Vagina (tissue), 2 donors: ENCODE measurements at regions of chr7 and their contacts with region 1.

Region 1: DNA sequence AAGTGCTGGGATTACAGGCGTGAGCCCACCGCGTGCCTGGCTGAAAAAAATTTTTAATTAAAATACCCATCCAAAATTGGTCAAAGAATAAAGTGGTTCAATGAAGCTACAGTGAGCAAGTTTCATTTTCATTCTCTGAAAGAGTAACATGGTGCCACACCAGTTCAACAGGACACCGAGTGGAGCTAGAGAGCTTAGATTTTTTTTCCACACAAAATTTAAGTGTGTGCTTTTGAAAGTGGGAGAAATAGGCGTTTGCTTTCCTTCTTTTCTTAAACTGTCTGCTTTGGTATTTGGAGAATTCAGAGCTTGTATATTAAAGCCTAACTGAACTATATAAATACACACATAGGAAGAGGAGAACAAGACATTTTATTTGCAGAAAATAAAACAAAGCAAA is 43.4 kb downstream of the BPGM start:
- DNase-seq: no peak
- H3K4me3 ChIP-seq: peak overlapping the region; percentile 17 to 25
- H3K27ac ChIP-seq: peak overlapping the region; percentile 64
- H3K4me1 ChIP-seq: peaks cover 43% of the 10 kb centered on the region
- H3K27me3 ChIP-seq: no peaks in the 10 kb centered on the region
- CTCF ChIP-seq: peak in 1 of 3 experiments; percentile 67
- POLR2A ChIP-seq: no peak

Region 2: GRCh38 chr7:134741907-134742635 is 52.1 kb after region 1 on chr7:
- intact Hi-C with region 1: loop called (anchors 10 kb)
- DNase-seq: no peak
- H3K4me3 ChIP-seq: no peak overlapping the region
- H3K27ac ChIP-seq: peak overlapping the region; percentile 84
- H3K4me1 ChIP-seq: peaks cover 10% of the 10 kb centered on the region
- H3K27me3 ChIP-seq: no peaks in the 10 kb centered on the region
- CTCF ChIP-seq: no peak
- POLR2A ChIP-seq: no peak

Region 3: GRCh38 chr7:134782121-134782623 is 92.2 kb after region 1 on chr7:
- intact Hi-C with region 1: loop called (anchors 5 kb)
- DNase-seq: no peak
- H3K4me3 ChIP-seq: peak overlapping the region; percentile 62 to 63
- H3K27ac ChIP-seq: peak overlapping the region; percentile 92
- H3K4me1 ChIP-seq: peaks cover 59% of the 10 kb centered on the region
- H3K27me3 ChIP-seq: no peaks in the 10 kb centered on the region
- CTCF ChIP-seq: no peak
- POLR2A ChIP-seq: no peak

Region 4: GRCh38 chr7:134891262-134891695 is 201.3 kb after region 1 on chr7:
- intact Hi-C with region 1: loop called (anchors 5 kb)
- DNase-seq: peak in 1 of 2 donors; percentile 95
- H3K4me3 ChIP-seq: peak overlapping the region; percentile 48 to 49
- H3K27ac ChIP-seq: peak overlapping the region; percentile 83
- H3K4me1 ChIP-seq: peaks cover 46% of the 10 kb centered on the region
- H3K27me3 ChIP-seq: no peaks in the 10 kb centered on the region
- CTCF ChIP-seq: no peak
- POLR2A ChIP-seq: peak in 1 of 2 donors; percentile 25

Region 5: DNA sequence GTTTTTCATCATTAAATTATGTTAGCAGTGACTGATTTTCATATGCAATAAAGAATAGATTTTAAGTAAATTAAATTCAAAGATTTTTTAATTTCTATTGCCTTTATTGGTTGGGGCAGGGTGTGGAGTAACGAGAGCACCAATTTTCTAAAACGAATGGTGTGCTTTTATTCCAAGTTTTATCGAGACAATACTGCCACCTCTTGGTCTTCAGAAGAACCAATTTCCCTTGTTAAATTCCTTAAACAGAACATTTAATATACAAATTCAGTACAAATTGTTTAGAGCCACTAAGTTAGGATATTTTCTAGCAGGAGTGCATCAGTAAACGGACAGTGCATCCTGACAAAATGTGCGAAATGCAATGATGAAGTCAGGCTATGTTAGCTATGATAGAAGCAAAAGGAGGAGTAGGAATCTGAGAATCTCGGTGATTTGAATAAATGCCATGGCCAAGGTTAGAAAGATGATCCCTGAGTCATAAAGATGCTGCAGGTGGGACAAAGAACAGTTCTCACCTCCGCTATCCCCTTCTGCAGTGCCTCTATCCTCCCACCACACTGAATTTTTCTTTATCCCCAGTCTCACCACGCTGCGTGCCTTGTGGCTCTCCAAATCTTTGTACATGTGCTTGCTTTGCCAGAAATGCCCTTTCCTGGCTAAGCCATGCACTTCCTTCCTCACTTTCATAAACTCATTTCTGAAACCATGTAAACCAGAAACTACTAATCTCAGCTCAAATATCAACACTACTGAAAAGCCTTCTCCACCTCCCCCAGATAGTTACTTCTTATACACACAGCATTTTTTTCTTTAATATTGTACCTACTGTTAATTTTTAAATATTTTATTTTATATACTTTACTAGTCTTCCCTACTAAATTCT is 264.4 kb after region 1 on chr7:
- intact Hi-C with region 1: loop called (anchors 5 kb)
- DNase-seq: no peak
- H3K4me3 ChIP-seq: no peak overlapping the region
- H3K27ac ChIP-seq: no peak overlapping the region
- H3K4me1 ChIP-seq: no peaks in the 10 kb centered on the region
- H3K27me3 ChIP-seq: no peaks in the 10 kb centered on the region
- CTCF ChIP-seq: peak; percentile 32 to 63 (median 41)
- POLR2A ChIP-seq: no peak

Region 6: DNA sequence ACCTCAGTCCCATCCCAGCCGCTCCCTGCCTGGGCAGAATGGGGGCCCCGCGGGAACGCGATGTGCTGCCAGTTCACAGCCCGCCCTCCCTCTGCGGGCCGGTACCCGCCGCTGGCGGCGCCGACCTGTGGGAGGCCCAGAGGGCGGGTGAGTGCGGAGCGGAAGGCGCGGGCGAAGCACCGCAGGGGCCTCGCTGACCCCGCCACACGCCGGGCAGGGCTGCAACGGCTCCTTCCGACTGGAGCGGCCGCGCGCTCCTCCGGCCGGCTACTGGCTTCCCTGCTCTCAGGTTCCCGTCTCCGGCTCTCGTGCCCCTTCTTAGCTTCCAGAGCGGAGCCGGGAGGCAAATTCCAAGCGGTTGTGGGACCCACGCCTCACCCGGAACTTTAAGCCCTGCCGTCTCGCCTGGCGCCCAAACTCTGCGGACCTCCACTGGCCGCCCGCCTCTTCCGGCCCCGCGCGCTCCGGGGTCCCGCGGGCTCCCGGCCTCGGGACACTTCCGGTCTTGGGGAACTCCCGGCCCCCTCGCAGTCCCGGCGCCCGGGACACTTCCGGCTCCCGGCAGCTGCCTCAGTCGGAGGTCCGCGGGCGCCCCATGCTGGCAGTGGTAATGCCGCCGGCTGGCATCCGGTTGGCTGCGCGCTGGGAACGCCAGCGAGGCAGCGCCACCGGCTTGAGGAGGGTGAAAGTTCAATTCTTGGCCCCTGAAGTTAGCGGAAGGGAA is 480.4 kb after region 1 on chr7 and contains the start of gene CYREN:
- intact Hi-C with region 1: loop called (anchors 10 kb)
- DNase-seq: no peak
- H3K4me3 ChIP-seq: peak within 1 kb of the TSS; percentile 78 to 84
- H3K27ac ChIP-seq: peak within 1 kb of the TSS; percentile 98
- H3K4me1 ChIP-seq: peaks cover 43% of the 10 kb centered on the region
- H3K27me3 ChIP-seq: no peaks in the 10 kb centered on the region
- CTCF ChIP-seq: peak; percentile 31 to 77 (median 50)
- POLR2A ChIP-seq: peak in 1 of 2 donors; percentile 26
- total RNA-seq, gene CYREN: 33.4 TPM